ENCODE measurements at regions of chr9 and their contacts with region 1.

Region 1: DNA sequence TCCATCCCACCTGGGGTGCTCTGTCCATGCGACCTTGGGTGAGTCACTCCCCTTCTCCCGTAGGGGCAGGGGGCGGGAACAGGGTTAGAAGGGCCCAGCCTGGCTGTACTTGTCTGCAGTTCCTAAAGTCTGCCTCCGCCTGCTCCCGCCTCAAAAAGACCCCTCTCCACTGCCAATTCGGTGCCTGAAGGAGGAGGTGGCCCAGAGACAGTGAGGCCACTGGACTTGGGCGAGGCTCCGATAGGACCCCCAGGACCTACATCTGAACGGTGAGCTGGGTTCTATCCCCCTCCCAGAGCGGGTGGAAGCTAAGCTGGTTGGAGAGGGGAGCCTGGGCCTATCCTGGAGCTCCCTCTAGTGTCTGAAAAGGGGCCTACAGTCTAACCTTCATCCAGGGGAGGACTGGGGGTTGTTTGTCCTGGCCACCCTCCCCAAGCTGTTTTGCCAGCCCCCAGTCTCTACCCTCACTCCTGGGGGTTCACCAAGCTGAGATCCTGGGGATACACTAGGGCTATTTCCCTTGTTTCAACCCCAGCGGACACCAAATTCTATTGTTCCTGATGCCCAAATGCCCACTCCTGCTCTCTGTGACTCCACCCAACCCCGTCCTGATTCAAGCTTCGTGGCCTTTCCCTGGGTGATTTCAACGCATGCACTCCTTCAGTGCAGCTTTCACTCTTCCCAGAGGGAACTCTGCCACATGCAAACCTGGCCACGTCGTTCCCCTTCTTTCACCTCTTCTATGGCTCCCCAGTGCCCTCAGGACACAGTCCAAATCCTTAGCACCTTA is 6.1 kb upstream of the CRB2 start:
- DNase-seq: peak in 1 of 3 donors; percentile 60
- ATAC-seq: peak; percentile 81 to 89 (median 86)
- H3K4me3 ChIP-seq: no peak overlapping the region
- H3K27ac ChIP-seq: no peak overlapping the region
- H3K4me1 ChIP-seq: peaks cover 0 to 9% (median 0%) of the 10 kb centered on the region in 4 donors
- H3K27me3 ChIP-seq: no peaks in the 10 kb centered on the region
- CTCF ChIP-seq: peak; percentile 92 to 96 (median 94)
- POLR2A ChIP-seq: no peak

Region 2: GRCh38 chr9:123081824-123082223 is 268.1 kb before region 1 on chr9:
- intact Hi-C with region 1: loop called in 1 of 2 experiments (anchors 10 kb)
- DNase-seq: no peak
- ATAC-seq: peak; percentile 72 to 82 (median 78)
- H3K4me3 ChIP-seq: no peak overlapping the region
- H3K27ac ChIP-seq: no peak overlapping the region
- H3K4me1 ChIP-seq: peaks cover 0 to under 1% (median 0%) of the 10 kb centered on the region in 4 donors
- H3K27me3 ChIP-seq: no peaks in the 10 kb centered on the region
- CTCF ChIP-seq: peak; percentile 60 to 69 (median 68)
- POLR2A ChIP-seq: no peak

Region 3: DNA sequence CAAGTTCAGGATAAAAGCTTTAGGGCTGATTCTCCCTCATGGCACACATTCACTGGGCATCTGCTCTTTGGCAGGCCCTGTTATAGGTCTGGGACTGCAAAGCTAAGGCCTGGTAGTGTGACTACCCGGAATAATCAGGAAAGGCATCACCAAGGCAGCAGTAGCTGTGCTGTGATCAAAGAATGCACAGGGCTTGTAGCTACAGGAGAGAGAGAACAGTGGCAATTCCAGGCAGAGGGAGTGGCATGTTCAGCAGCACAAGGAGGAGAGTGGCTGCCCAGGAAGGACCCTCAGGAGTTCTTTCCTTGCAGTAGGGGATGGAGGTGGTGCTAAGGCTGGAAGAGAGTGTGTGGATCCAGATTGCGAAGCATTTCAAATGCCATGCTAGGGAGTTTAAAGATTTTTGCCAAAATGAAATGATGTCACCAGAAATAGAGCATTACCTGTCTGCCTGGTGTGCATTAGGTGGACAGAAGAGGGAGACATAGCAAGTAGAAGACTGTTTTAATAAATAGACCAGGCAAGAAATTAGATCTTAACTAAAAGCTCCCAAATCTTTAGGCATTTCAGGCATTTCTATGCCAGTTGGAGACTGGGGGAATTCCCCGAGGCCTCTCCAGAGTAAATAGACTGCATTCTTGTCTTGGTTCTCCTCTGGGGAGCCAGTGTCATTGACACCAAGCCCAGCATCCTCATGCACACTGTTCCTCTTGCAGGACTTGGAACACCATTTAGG is 247.3 kb before region 1 on chr9:
- intact Hi-C with region 1: loop called in 1 of 2 experiments (anchors 10 kb)
- DNase-seq: no peak
- ATAC-seq: peak in 3 of 4 donors; percentile 11 to 53 (median 24)
- H3K4me3 ChIP-seq: no peak overlapping the region
- H3K27ac ChIP-seq: peak overlapping the region in 2 of 3 donors; percentile 22 to 38
- H3K4me1 ChIP-seq: peaks cover 0 to 18% (median 6%) of the 10 kb centered on the region in 4 donors
- H3K27me3 ChIP-seq: no peaks in the 10 kb centered on the region
- CTCF ChIP-seq: peak; percentile 41 to 54 (median 48)
- POLR2A ChIP-seq: no peak

Measured in right lobe of liver (tissue), 6 donors.